ENCODE measurements at regions of chr12 and their contacts with region 1.

Region 1: GRCh38 chr12:57214387-57214781 is 2.2 kb upstream of the NXPH4 start:
- DNase-seq: peak; percentile 50 to 56
- H3K4me3 ChIP-seq: no peak overlapping the region
- H3K27ac ChIP-seq: no peak overlapping the region
- H3K4me1 ChIP-seq: peaks cover 8 to 30% of the 10 kb centered on the region in 2 donors
- H3K27me3 ChIP-seq: peaks cover 6% of the 10 kb centered on the region
- CTCF ChIP-seq: peak in 5 of 6 experiments; percentile 30 to 73 (median 51)
- POLR2A ChIP-seq: no peak

Region 2: DNA sequence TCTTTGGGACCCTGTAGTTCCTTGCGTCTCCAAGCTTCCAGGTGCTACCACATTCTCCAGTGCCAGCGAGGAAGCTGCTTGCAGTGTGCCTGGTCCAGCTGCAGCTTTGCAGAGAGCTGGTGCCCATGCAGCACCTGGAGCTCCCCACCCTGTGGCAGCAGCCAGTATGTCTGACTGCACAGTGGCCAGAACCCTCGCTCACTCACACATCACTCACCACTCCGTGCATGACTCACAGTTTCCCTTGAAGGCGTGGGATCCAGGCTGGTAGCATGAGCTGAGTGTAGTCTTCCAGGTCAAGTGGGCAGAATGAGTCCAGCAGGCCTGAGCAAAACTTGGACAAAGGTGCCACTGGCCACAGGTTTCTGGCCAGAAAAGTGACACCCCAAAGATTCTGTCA is 313.8 kb before region 1 on chr12:
- intact Hi-C with region 1: no loop called
- DNase-seq: no peak
- H3K4me3 ChIP-seq: no peak overlapping the region
- H3K27ac ChIP-seq: no peak overlapping the region
- H3K4me1 ChIP-seq: no peaks in the 10 kb centered on the region
- H3K27me3 ChIP-seq: no peaks in the 10 kb centered on the region
- CTCF ChIP-seq: no peak
- POLR2A ChIP-seq: no peak

Region 3: DNA sequence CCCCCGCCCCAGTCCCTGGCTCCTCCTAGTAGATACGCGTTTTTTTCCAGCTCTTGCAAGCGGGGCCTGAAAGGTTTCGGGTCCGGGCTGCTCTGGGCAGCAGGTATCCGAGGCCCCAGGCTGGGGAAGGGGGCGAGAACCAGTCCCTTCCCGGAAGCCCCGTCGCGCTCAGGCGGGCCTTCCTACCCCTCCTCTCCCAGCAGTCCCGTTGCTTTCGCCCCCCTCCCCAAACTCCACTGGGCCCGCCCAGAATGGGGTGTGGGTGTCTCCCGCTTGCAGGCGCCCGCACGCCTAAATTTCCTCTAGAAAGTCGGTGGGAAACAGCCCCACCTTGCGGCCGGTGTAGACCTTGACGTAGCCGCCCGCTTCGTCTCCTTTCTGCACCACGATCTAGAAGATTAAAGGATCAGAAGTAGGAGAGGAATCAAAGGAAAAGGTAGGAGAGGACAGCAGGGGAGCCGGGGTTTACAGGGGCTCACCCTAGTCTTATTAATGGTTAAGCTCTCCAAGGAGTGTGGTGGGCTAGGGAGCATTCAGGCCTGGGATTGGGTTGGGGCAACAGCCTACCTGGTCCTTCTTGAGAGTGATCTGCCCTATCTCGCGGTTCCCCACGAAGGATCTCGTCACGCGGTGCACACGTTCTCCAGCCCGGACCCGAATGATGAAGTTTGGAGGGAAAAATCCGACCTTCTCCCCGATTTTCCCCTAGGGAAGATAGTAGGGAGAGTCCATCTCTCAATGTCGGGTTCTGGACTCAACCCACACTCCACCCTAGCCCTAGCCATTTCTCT is 29.3 kb after region 1 on chr12:
- intact Hi-C with region 1: loop called (anchors 2 kb)
- DNase-seq: peak; percentile 71 to 75
- H3K4me3 ChIP-seq: peak overlapping the region in 1 of 3 donors; percentile 27
- H3K27ac ChIP-seq: no peak overlapping the region
- H3K4me1 ChIP-seq: peaks cover 31 to 47% of the 10 kb centered on the region in 2 donors
- H3K27me3 ChIP-seq: peaks cover 35% of the 10 kb centered on the region
- CTCF ChIP-seq: peak; percentile 24 to 80 (median 60)
- POLR2A ChIP-seq: no peak

Measured in thyroid gland (tissue), 4 donors.